Activated naive CD4-positive, alpha-beta T cell treated with anti-CD3 and anti-CD28 coated beads for 36 hours (primary cell): ENCODE measurements at regions of chr18 and their contacts with region 1.

Region 1: DNA sequence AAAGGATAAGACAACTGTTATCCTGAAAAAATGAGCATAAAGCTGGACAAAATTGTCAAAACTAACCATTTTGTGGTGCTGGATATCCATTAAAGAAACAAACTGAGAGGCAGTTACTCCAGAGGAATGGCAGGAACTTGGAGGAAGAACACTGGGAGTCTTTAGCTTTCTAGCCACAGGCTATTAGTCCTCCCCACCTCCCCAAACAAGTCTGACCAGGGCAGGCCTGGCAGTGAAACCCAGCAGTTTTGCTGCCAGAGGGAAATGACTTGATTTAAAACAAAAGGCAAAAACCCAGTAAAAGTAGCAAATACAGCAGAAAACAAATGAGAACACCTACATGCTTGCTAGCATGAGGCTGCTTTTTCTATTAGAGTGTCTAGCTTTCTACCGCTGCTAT is 34.9 kb downstream of the OSBPL1A start:
- DNase-seq: no peak
- H3K4me3 Mint-ChIP-seq: no peak overlapping the region
- H3K27ac Mint-ChIP-seq: no peak overlapping the region
- H3K4me1 Mint-ChIP-seq: no peaks in the 10 kb centered on the region
- H3K27me3 Mint-ChIP-seq: no peaks in the 10 kb centered on the region

Region 2: GRCh38 chr18:24176727-24177416 is 185.9 kb before region 1 on chr18:
- CTCF ChIA-PET with region 1: interaction called, 4 read pairs
- intact Hi-C with region 1: loop called (anchors 5 kb)
- DNase-seq: peak; percentile 66
- H3K4me3 Mint-ChIP-seq: no peak overlapping the region
- H3K27ac Mint-ChIP-seq: no peak overlapping the region
- H3K4me1 Mint-ChIP-seq: no peaks in the 10 kb centered on the region
- H3K27me3 Mint-ChIP-seq: no peaks in the 10 kb centered on the region

Region 3: GRCh38 chr18:24278591-24278990 is 84.2 kb before region 1 on chr18:
- CTCF ChIA-PET with region 1: no interaction called
- intact Hi-C with region 1: no loop called
- DNase-seq: no peak
- H3K4me3 Mint-ChIP-seq: no peak overlapping the region
- H3K27ac Mint-ChIP-seq: no peak overlapping the region
- H3K4me1 Mint-ChIP-seq: no peaks in the 10 kb centered on the region
- H3K27me3 Mint-ChIP-seq: peaks cover 11% of the 10 kb centered on the region

Region 4: GRCh38 chr18:24426398-24427294 is 63.9 kb after region 1 on chr18 and contains the start of gene IMPACT:
- CTCF ChIA-PET with region 1: interaction called, 10 read pairs
- intact Hi-C with region 1: loop called (anchors 5 kb)
- DNase-seq: peak; percentile 75
- H3K4me3 Mint-ChIP-seq: peak within 1 kb of the TSS; percentile 91
- H3K27ac Mint-ChIP-seq: peak within 1 kb of the TSS; percentile 78
- H3K4me1 Mint-ChIP-seq: peaks cover 22% of the 10 kb centered on the region
- H3K27me3 Mint-ChIP-seq: peaks cover 17% of the 10 kb centered on the region
- total RNA-seq, gene IMPACT: 19.4 to 19.9 TPM

Region 5: DNA sequence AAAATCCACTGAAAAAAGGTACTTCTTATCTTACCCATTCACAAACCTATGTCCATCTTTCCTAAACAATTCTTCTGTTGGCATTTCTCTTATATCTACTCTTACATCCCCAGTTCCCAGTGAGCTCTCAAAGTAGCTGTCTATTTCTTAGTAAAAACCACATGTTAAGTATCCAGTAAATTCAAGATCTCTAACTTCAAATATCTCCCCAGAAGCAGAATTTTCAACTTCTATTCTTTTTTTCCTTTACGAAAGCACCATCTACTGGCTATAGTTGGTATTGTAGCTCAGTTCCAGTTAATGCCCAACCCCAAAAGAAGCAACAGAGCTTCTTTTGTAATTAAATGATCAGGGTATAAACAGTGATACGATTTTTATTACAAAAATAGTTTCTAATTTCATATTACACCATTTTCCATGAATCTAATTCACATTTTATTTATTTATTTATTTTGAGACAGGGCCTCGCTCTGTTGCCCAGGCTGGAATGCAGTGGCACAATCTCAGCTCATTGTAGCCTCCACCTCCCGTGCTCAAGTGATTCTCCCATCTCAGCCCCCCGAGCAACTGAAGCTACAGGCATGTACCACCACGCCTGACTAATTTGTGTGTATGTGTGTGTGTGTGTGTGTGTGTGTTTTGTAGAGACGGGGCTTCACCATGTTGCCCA is 126.2 kb after region 1 on chr18:
- CTCF ChIA-PET with region 1: interaction called, 273 read pairs
- intact Hi-C with region 1: loop called (anchors 1 kb)
- DNase-seq: no peak
- H3K4me3 Mint-ChIP-seq: no peak overlapping the region
- H3K27ac Mint-ChIP-seq: no peak overlapping the region
- H3K4me1 Mint-ChIP-seq: peaks cover 3% of the 10 kb centered on the region
- H3K27me3 Mint-ChIP-seq: peaks cover 6% of the 10 kb centered on the region

Region 6: DNA sequence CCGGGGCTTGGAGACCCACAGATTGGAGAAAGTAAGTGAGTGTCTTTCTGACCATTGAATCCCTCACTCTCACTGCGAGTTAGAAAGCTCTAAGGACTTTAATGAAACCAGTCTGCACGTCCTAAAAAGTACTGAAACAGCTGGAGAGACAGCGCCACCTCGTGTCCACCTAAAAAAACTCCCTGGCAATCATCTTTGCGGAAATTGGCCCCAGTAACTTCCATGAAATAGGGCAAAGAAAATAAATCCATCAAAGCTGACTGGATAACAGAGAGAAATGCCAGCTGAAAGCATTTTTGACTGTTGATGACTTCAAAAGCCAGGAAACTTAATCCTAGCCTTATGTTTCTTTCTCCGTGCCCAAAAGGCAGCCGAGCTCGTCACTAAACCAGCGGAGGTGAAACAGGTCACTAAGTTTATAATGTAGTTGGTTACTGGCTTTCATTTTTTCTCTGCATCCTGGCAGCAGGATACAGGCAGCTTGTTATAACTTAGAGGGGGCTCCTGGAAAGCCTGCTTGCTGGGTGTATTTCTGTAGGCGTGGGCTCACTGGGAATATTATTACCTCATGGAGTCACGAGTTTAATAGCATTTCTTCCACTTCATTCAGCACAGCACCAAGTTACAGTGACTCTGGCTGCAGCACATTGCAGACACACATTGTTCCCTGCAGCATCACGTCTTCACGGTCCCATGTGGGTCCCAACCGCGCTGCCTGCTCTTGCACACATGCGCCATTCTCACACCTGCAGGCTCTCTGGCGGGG is 364.2 kb after region 1 on chr18:
- CTCF ChIA-PET with region 1: interaction called, 6 read pairs
- intact Hi-C with region 1: loop called (anchors 1 kb)
- DNase-seq: peak; percentile 73
- H3K4me3 Mint-ChIP-seq: no peak overlapping the region
- H3K27ac Mint-ChIP-seq: no peak overlapping the region
- H3K4me1 Mint-ChIP-seq: no peaks in the 10 kb centered on the region
- H3K27me3 Mint-ChIP-seq: peaks cover 14% of the 10 kb centered on the region